HEK293T (cell line): ENCODE measurements at regions of chr12 and their contacts with region 1.

Region 1: DNA sequence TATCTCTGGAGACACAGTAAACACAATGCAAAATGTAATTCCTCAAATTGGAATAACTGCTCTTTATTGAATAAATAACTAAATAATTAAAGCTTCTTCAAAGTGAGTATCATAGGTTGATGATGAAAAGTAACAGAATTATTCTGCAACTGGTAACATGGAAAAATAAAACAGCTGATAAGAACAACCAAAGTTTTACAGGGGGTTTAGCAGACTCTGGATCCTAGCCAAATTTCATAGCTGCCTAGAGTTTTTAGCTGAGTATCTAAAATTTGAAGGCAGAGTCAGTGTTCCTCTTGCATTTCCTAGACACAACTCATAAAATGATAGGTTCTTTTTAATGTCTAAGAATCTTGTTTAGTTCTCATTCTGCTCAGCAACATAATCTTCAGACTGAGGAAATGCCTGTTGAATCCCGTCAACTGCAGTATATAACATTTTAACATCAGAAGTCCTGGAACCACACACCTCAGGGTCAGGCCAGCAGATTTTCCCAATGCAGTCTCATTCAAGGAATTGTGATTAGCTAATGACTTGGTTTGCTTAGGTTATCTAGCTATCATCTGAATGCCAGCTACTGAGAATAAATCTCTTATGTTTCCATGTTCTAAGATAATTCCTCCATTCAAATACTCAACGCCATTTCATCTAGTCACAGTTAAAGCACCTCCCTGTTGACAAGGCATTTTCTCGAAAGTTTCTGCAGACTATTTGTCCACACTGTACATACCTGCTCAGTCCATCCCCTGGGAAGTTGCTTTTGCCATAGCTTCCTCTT is 411.6 kb downstream of the BCAT1 start:
- DNase-seq: no peak

Region 2: DNA sequence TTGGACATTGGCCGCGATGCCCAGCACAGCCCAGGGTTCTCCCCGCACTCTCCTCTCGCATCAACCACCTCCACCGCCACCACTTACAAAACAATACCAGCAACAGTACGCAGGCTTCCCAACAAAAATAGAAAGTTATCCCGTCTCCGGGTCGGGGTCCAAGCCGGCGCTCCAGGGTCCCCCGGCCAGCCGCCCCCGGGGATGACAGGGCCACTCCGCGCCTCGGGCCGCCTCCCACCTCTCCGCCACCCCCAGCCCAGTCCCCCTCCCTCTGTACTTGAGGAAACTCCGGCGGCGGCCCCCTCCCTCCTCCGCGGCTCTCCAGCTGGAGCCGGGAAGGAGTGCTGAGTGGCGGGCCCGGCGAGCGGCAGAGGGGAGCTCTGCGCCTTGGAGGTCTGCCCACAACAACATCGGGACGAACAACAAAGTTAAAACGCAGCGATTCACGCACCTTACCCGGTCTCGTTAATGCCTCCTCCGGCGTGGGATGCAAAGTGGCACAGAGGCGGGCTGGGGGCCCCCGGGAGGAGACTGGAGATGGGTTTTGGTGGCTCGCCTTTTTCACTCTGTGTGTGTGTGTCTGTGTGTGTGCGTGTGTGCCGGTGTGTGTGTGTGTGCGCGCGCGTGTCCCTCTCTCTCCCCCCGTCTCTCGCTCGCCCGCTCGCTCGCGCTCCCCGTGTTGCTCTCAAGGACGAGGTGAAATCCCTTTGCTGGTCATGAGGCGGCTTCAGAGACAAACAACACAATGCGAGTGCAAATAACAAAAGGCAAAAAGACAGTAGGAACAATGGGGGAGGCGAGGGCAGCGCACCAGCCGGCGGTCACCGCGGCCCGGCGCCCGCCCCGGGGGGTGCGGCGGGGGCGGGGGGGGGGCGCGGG is 24.8 kb after region 1 on chr12:
- CTCF ChIA-PET with region 1: no interaction called
- POLR2A ChIA-PET with region 1: interaction called, 15 read pairs
- DNase-seq: peak; percentile 61